Activated naive CD4-positive, alpha-beta T cell treated with anti-CD3 and anti-CD28 coated beads for 36 hours (primary cell): ENCODE measurements at regions of chr3 and their contacts with region 1.

Region 1: DNA sequence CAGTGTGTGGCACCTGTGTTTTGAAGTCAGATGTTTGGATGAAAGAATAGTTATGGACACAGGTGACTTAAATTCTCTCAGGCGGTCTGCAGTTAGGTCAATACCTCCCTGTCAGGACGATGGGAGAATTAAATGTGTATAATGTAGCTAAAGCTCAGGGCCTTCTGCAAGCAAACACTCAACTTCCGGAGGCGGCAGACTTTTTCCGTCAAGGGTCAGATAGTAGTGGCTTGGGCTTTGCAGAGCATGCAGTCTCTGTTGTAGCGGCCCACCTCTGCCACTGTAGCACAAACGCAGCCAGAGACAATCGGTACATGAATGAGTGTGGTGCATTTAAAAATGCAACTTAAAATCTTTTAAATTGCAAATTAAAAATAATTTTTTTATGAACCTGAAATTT is 47.4 kb downstream of the CMTM8 start:
- DNase-seq: peak; percentile 20
- H3K4me3 Mint-ChIP-seq: peak overlapping the region; percentile 11
- H3K27ac Mint-ChIP-seq: peak overlapping the region; percentile 38
- H3K4me1 Mint-ChIP-seq: peaks cover 40% of the 10 kb centered on the region
- H3K27me3 Mint-ChIP-seq: no peaks in the 10 kb centered on the region

Region 2: DNA sequence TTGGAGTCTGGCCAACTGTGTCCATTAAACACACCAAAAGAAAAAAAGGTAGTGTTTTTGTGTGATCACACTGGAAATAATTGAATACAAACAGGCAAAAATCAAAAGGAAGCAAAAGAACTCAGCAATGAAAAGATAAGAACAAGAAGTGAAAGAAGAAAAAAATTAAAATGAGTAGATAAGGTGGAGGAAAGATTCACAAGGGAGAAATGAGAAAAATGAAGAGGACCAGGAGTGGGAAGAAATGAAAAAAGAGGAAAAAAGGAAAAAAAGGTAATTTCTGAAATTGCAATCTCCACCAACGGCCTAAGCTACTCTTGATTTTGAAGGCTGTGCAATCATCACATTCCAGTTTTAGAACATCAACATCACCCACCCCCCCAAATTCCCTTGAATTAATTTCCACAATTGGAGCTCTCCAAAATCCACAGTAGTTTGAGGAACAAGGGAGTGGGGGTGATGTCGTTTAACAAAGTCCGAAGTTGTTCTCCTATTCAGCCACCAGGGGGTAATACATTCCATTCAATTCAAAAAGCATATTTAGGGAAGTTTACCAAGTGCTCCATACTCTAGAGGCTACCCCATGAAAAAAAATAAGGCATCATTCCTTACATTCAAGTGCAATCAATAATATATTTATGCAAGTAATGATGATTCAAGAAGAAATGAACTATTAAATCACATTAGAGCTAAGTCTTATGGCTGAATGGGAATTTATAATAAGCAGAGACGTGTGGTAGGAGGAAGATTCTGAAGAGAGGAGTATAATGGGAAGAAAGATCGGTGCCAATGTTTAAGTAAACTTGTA is 266.9 kb before region 1 on chr3:
- CTCF ChIA-PET with region 1: no interaction called
- intact Hi-C with region 1: no loop called
- DNase-seq: no peak
- H3K4me3 Mint-ChIP-seq: no peak overlapping the region
- H3K27ac Mint-ChIP-seq: no peak overlapping the region
- H3K4me1 Mint-ChIP-seq: no peaks in the 10 kb centered on the region
- H3K27me3 Mint-ChIP-seq: peaks cover 2% of the 10 kb centered on the region

Region 3: DNA sequence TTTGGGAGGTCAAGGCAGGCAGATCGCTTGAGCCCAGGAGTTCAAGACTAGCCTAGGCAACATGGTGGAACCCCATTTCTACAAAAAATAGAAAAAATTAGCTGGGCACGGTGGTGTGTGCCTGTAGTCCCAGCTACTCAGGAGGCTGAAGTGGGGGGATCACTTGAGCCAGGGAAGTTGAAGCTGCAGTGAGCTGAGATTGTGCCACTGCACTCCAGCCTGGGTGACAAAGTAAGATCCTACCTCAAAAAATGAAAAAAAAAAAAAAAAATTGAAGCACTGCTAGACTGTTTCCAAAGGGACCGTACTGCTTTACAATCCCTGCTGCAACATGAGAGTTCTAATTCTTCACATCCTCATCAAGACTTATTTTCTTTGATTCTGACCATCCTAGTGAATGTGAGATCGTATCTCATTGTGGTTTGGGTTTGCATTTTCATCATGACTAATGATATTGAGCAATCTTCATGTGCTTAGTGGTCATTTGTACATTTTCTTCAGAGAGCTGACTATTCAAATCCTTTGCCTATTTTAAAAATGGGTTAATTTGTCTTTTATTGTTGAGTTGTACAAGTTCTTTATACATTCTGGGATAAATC is 36.6 kb before region 1 on chr3:
- CTCF ChIA-PET with region 1: no interaction called
- intact Hi-C with region 1: loop called (anchors 2 kb)
- DNase-seq: no peak
- H3K4me3 Mint-ChIP-seq: no peak overlapping the region
- H3K27ac Mint-ChIP-seq: no peak overlapping the region
- H3K4me1 Mint-ChIP-seq: peaks cover 31% of the 10 kb centered on the region
- H3K27me3 Mint-ChIP-seq: no peaks in the 10 kb centered on the region

Region 4: GRCh38 chr3:32698506-32698905 is 412.6 kb after region 1 on chr3:
- CTCF ChIA-PET with region 1: no interaction called
- intact Hi-C with region 1: no loop called
- DNase-seq: no peak
- H3K4me3 Mint-ChIP-seq: no peak overlapping the region
- H3K27ac Mint-ChIP-seq: no peak overlapping the region
- H3K4me1 Mint-ChIP-seq: peaks cover 20% of the 10 kb centered on the region
- H3K27me3 Mint-ChIP-seq: no peaks in the 10 kb centered on the region

Region 5: DNA sequence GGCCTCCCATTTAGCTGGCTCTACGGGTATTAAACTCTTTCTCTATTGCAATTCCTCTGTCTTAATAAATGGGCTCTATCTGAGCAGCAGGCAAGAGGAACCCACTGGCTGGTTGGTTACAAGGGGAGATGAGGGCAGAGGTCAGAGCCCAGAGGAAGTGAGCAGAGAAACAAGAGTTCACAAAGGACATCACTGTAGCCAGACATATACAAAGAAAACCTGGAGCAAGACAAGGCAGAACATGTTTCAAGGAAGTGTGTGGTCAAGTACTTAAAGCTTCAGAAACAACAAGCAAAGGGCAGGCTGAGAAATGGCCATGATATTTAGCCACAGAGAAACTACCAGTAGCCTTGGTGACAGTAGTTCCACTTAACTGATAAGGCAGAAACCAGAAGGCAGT is 908.4 kb after region 1 on chr3:
- CTCF ChIA-PET with region 1: no interaction called
- intact Hi-C with region 1: no loop called
- DNase-seq: no peak
- H3K4me3 Mint-ChIP-seq: no peak overlapping the region
- H3K27ac Mint-ChIP-seq: no peak overlapping the region
- H3K4me1 Mint-ChIP-seq: no peaks in the 10 kb centered on the region
- H3K27me3 Mint-ChIP-seq: peaks cover 3% of the 10 kb centered on the region